Heart left ventricle (tissue), 16 donors: ENCODE measurements at regions of chr5 and their contacts with region 1.

Region 1: DNA sequence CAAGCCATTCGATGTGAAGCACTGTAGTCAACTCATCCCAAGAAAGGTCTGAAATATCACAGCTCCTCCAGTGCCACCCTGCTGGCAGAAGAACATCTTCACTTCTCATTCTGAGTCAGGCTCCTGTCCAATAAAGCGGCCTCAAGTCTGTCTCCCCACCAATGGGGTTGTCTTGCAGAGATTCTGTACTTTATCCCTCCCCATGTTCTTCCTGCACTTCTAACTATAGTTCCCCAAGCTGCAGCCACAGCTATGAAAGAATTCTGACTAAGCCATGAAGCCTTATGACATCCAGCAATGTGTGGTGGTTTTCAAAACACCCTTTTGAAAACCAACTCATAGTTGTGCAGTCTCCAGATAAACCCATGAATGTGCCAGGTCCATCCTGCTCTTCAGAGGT is 6.8 kb downstream of the MACROH2A1 start:
- DNase-seq: no peak
- ATAC-seq: peak in 3 of 4 donors; percentile 9 to 39 (median 13)
- H3K4me3 ChIP-seq: no peak overlapping the region
- H3K27ac ChIP-seq: peak overlapping the region in 7 of 12 donors; percentile 9 to 96 (median 38)
- H3K4me1 ChIP-seq: peaks cover 8 to 99% (median 88%) of the 10 kb centered on the region in 12 donors
- H3K27me3 ChIP-seq: no peaks in the 10 kb centered on the region
- CTCF ChIP-seq: no peak
- POLR2A ChIP-seq: no peak

Region 2: GRCh38 chr5:135230251-135230925 is 161.9 kb before region 1 on chr5:
- intact Hi-C with region 1: no loop called
- DNase-seq: peak in 3 of 5 donors; percentile 60 to 79 (median 74)
- ATAC-seq: peak; percentile 65 to 86 (median 72)
- H3K4me3 ChIP-seq: no peak overlapping the region
- H3K27ac ChIP-seq: peak overlapping the region in 1 of 12 donors; percentile 20
- H3K4me1 ChIP-seq: peaks cover 0 to 21% (median 6%) of the 10 kb centered on the region in 12 donors
- H3K27me3 ChIP-seq: no peaks in the 10 kb centered on the region
- CTCF ChIP-seq: no peak
- POLR2A ChIP-seq: no peak

Region 3: GRCh38 chr5:135332519-135333150 is 59.6 kb before region 1 on chr5:
- intact Hi-C with region 1: no loop called
- DNase-seq: no peak
- ATAC-seq: peak in 1 of 4 donors; percentile 7
- H3K4me3 ChIP-seq: no peak overlapping the region
- H3K27ac ChIP-seq: no peak overlapping the region
- H3K4me1 ChIP-seq: peaks cover 0 to 19% (median 2%) of the 10 kb centered on the region in 12 donors
- H3K27me3 ChIP-seq: no peaks in the 10 kb centered on the region
- CTCF ChIP-seq: peak in 11 of 12 donors; percentile 18 to 59 (median 45)
- POLR2A ChIP-seq: no peak

Region 4: GRCh38 chr5:135441350-135441831 is 49.1 kb after region 1 on chr5:
- intact Hi-C with region 1: loop called in 1 of 10 experiments (anchors 2 kb)
- DNase-seq: peak in 1 of 5 donors; percentile 19
- ATAC-seq: no peak
- H3K4me3 ChIP-seq: no peak overlapping the region
- H3K27ac ChIP-seq: peak overlapping the region in 1 of 12 donors; percentile 21
- H3K4me1 ChIP-seq: peaks cover 0 to 64% (median 10%) of the 10 kb centered on the region in 12 donors
- H3K27me3 ChIP-seq: no peaks in the 10 kb centered on the region
- CTCF ChIP-seq: no peak
- POLR2A ChIP-seq: no peak